AG04450 (cell line): ENCODE measurements at regions of chr3 and their contacts with region 1.

Region 1: DNA sequence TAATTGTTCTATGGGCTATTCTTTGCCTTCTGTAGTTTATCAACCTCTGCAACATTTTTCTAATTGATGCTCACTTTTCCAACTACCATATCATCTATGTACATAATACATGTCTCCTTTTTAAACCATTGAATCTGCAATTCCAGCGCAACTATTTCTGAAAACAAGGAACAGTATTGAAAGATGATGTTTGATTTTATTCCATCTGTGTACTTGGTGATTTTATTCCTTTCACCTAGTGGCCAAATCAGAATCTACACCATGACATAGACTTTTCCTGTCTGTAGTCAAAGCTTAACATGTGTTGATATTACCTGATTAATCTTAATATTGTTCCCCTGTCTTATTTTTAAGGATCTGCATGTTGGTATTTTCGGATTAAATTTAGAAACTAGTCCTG is 13.0 kb downstream of the NKTR start:
- DNase-seq: no peak
- H3K4me3 ChIP-seq: no peak overlapping the region
- H3K27ac ChIP-seq: no peak overlapping the region
- H3K27me3 ChIP-seq: no peaks in the 10 kb centered on the region
- CTCF ChIP-seq: peak; percentile 48

Region 2: GRCh38 chr3:42600111-42600988 is 13.1 kb before region 1 on chr3 and contains the start of gene NKTR:
- CTCF ChIA-PET with region 1: interaction called, 14 read pairs
- POLR2A ChIA-PET with region 1: interaction called, 5 read pairs
- DNase-seq: peak; percentile 97
- H3K4me3 ChIP-seq: peak within 1 kb of the TSS; percentile 85
- H3K27ac ChIP-seq: peak within 1 kb of the TSS; percentile 90
- H3K27me3 ChIP-seq: no peaks in the 10 kb centered on the region
- CTCF ChIP-seq: no peak
- polyA plus RNA-seq, gene NKTR: 40.2 and 56.2 TPM in 2 replicates

Region 3: DNA sequence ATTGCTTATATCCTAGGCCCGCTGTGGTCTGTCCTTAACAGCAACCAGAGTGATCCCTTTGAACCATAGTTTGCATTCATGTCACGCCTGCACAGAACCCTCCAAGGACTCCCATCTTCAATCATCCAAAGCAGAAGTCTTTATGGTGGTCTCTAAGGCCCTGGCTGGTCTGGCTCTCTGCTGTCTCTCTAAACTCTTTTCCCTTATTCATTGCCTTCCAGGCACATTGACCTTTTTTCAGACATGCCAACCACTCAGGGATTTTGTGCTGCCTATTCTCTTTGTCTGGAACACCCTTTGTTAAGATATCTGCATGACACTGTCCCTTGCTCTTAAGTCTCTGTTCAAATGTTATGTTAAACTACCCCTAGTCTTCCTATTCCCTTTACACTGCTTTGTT is 18.2 kb after region 1 on chr3:
- CTCF ChIA-PET with region 1: interaction called, 11 read pairs
- POLR2A ChIA-PET with region 1: interaction called, 3 read pairs
- DNase-seq: no peak
- H3K4me3 ChIP-seq: no peak overlapping the region
- H3K27ac ChIP-seq: no peak overlapping the region
- H3K27me3 ChIP-seq: no peaks in the 10 kb centered on the region
- CTCF ChIP-seq: no peak